ENCODE measurements at regions of chr16 and their contacts with region 1.

Region 1: GRCh38 chr16:28924732-28925385 is at the start of gene RABEP2:
- DNase-seq: peak; percentile 86
- ATAC-seq: peak; percentile 85
- H3K4me3 ChIP-seq: peak within 1 kb of the TSS; percentile 84 to 99 (median 87)
- H3K27ac ChIP-seq: peak within 1 kb of the TSS; percentile 89
- H3K4me1 ChIP-seq: peaks cover 71% of the 10 kb centered on the region
- H3K27me3 ChIP-seq: no peaks in the 10 kb centered on the region
- CTCF ChIP-seq: no peak
- EP300 ChIP-seq: no peak
- POLR2A ChIP-seq: no peak; a peak in 1 of 4 replicates
- RAD21 ChIP-seq: no peak
- total RNA-seq, gene RABEP2: 16.1 and 18.4 TPM in 2 replicates

Region 2: GRCh38 chr16:28846080-28846932 is 78.6 kb before region 1 on chr16 and contains the start of gene TUFM:
- CTCF ChIA-PET with region 1: no interaction called
- POLR2A ChIA-PET with region 1: interaction called, 25 read pairs
- in situ Hi-C with region 1: no loop called
- intact Hi-C with region 1: loop called (anchors 5 kb)
- DNase-seq: peak; percentile 99
- ATAC-seq: peak; percentile 87
- H3K4me3 ChIP-seq: peak within 1 kb of the TSS; percentile 75 to 97 (median 87)
- H3K27ac ChIP-seq: peak within 1 kb of the TSS; percentile 69
- H3K4me1 ChIP-seq: peaks cover 18% of the 10 kb centered on the region
- H3K27me3 ChIP-seq: no peaks in the 10 kb centered on the region; a peak in 1 of 5 replicates
- CTCF ChIP-seq: peak; percentile 98
- EP300 ChIP-seq: peak; percentile 47 to 73; a peak in 3 of 4 replicates
- POLR2A ChIP-seq: peak; percentile 58 to 66; a peak in 3 of 4 replicates
- RAD21 ChIP-seq: peak; percentile 47
- total RNA-seq, gene TUFM: 138 and 298 TPM in 2 replicates

Region 3: DNA sequence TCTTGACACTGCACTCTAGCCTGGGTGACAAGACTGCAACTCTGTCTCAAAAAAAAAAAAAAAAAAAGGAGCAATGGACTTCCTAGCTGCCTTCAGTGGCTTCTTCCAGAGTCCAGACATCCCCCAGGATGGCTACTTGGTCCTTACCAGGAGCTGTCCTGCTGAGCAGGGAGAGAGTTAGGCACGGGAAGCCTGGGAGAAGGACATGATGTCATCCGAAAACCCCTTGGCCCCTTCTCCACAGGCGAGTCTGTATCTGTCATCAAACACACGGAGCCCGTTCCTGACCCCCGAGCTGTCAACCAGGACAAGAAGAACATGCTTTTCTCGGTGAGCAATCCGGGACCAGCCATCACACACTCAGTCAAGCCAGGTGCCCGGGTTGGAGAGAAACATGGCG is 37.9 kb before region 1 on chr16:
- CTCF ChIA-PET with region 1: no interaction called
- POLR2A ChIA-PET with region 1: interaction called, 11 read pairs
- in situ Hi-C with region 1: no loop called
- intact Hi-C with region 1: loop called (anchors 5 kb)
- DNase-seq: no peak
- ATAC-seq: no peak
- H3K4me3 ChIP-seq: no peak overlapping the region
- H3K27ac ChIP-seq: no peak overlapping the region
- H3K4me1 ChIP-seq: peaks cover 14% of the 10 kb centered on the region
- H3K27me3 ChIP-seq: no peaks in the 10 kb centered on the region
- CTCF ChIP-seq: no peak
- EP300 ChIP-seq: no peak
- POLR2A ChIP-seq: no peak
- RAD21 ChIP-seq: no peak

Region 4: GRCh38 chr16:28935924-28936783 is 11.3 kb after region 1 on chr16:
- CTCF ChIA-PET with region 1: no interaction called
- POLR2A ChIA-PET with region 1: interaction called, 60 read pairs
- in situ Hi-C with region 1: no loop called
- intact Hi-C with region 1: loop called (anchors 2 kb)
- DNase-seq: peak; percentile 88
- ATAC-seq: peak; percentile 93
- H3K4me3 ChIP-seq: peak overlapping the region; percentile 28 to 69 (median 40)
- H3K27ac ChIP-seq: peak overlapping the region; percentile 43
- H3K4me1 ChIP-seq: peaks cover 63% of the 10 kb centered on the region
- H3K27me3 ChIP-seq: no peaks in the 10 kb centered on the region
- CTCF ChIP-seq: peak; percentile 47
- EP300 ChIP-seq: no peak
- POLR2A ChIP-seq: peak; percentile 19 to 40; a peak in 1 of 4 replicates
- RAD21 ChIP-seq: no peak

Region 5: GRCh38 chr16:28950648-28951409 is 26.0 kb after region 1 on chr16 and contains the start of gene NFATC2IP:
- CTCF ChIA-PET with region 1: interaction called, 8 read pairs
- POLR2A ChIA-PET with region 1: interaction called, 19 read pairs
- in situ Hi-C with region 1: no loop called
- intact Hi-C with region 1: no loop called
- DNase-seq: peak; percentile 100
- ATAC-seq: peak; percentile 97
- H3K4me3 ChIP-seq: peak within 1 kb of the TSS; percentile 93 to 99 (median 97)
- H3K27ac ChIP-seq: peak within 1 kb of the TSS; percentile 67
- H3K4me1 ChIP-seq: peaks cover 49% of the 10 kb centered on the region
- H3K27me3 ChIP-seq: no peaks in the 10 kb centered on the region; a peak in 1 of 5 replicates
- CTCF ChIP-seq: no peak
- EP300 ChIP-seq: no peak
- POLR2A ChIP-seq: peak; percentile 63 to 89
- RAD21 ChIP-seq: peak; percentile 28; the same call in 1 of the 2 replicates
- total RNA-seq, gene NFATC2IP: 18.2 and 32.1 TPM in 2 replicates